ENCODE measurements at regions of chr6 and their contacts with region 1.

Region 1: GRCh38 chr6:11732036-11732631 is 46.5 kb downstream of the ADTRP start:
- DNase-seq: peak; percentile 85
- H3K4me3 Mint-ChIP-seq: peak overlapping the region; percentile 20
- H3K27ac Mint-ChIP-seq: peak overlapping the region; percentile 96
- H3K4me1 Mint-ChIP-seq: peaks cover 64% of the 10 kb centered on the region
- H3K27me3 Mint-ChIP-seq: no peaks in the 10 kb centered on the region

Region 2: DNA sequence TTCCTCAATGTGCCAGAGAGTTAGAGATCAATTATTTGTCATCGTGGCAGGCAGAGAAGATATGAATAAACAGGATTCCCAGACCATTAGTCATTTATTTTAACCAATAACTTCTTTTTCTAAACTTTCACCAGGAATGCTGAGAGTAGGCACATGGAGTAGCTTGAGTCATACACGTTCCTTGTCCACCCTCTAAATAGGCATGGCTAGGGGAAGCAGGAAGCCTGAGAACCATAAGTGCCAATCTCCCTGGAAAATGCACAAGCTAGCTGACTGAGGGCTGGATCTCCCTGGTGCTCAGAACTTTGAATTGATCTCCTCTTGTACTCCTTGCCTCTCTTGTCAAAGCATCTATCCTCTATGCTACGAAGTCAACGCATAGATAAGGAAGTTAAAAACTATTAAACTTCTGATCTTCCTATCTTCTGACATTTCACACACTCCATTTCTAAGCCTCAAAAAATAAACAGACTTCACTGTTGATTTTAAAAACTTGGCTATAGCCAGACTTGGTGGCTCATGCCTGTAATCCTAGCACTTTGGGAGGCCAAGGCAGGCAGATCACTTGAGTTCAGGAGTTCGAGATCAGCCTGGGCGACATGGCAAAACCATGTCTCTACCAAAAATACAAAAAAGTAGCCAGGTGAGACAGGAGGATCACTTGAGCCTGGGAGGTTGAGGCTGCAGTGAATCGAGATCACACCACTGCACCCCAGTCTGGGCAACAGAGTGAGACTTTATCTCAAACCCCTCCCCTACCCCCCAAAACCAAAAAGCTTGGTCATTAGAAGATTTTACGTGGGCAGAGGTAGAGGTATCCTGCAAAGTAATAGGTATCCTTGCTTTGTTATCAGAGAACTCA is 34.7 kb after region 1 on chr6:
- CTCF ChIA-PET with region 1: interaction called, 4 read pairs
- POLR2A ChIA-PET with region 1: interaction called, 10 read pairs
- intact Hi-C with region 1: loop called (anchors 1 kb)
- DNase-seq: no peak
- H3K4me3 Mint-ChIP-seq: no peak overlapping the region
- H3K27ac Mint-ChIP-seq: no peak overlapping the region
- H3K4me1 Mint-ChIP-seq: peaks cover 39% of the 10 kb centered on the region
- H3K27me3 Mint-ChIP-seq: peaks cover 8% of the 10 kb centered on the region

Region 3: GRCh38 chr6:11854408-11855165 is 122.5 kb after region 1 on chr6:
- CTCF ChIA-PET with region 1: no interaction called
- POLR2A ChIA-PET with region 1: no interaction called
- intact Hi-C with region 1: no loop called
- DNase-seq: peak; percentile 15
- H3K4me3 Mint-ChIP-seq: no peak overlapping the region
- H3K27ac Mint-ChIP-seq: no peak overlapping the region
- H3K4me1 Mint-ChIP-seq: peaks cover 6% of the 10 kb centered on the region
- H3K27me3 Mint-ChIP-seq: no peaks in the 10 kb centered on the region

Region 4: DNA sequence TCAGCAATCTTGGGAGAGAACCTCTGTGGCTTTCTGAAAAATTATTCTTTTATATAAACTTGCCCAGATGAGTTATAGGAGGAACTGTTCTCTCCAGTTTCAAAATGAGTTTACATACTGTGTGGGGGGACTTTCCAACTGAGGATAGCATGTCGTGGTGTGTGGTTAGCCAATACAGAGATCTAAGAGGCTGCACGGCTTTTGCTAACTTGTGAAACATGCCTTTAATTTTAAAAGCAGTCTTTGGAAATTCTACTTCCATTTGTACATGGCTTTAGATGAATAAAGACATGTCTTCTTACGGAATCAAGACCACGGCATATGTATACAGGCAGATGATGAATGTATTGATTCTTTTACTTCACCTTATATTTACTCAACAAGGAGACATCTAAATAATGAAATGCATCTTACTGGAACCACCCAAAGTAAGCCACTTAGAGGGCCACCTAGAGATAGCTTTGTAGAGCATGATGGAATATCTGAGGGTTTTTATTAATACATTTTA is 319.8 kb after region 1 on chr6:
- CTCF ChIA-PET with region 1: no interaction called
- POLR2A ChIA-PET with region 1: interaction called, 3 read pairs
- intact Hi-C with region 1: loop called (anchors 1 kb)
- DNase-seq: peak; percentile 78
- H3K4me3 Mint-ChIP-seq: peak overlapping the region; percentile 13
- H3K27ac Mint-ChIP-seq: peak overlapping the region; percentile 84
- H3K4me1 Mint-ChIP-seq: peaks cover 73% of the 10 kb centered on the region
- H3K27me3 Mint-ChIP-seq: no peaks in the 10 kb centered on the region

Region 5: DNA sequence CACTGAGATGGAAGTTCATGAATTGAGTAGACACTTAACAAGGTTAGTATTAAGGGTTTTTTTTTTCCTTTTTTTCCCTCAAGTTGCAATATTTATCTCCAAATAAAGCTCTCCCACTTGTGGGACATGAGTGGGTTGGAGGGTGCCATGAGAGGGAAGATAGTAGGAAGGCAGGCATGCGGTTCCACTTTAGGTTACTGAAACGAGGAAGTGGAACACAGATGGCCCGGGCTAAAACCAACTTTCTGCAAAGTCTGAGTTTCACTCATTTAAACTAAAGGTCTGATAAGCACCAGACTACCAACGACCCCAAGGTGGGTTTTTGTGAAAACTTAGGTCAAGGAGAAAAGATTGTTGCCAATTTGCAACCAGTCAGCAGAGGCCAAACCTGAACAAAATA is 1554.0 kb after region 1 on chr6:
- CTCF ChIA-PET with region 1: no interaction called
- POLR2A ChIA-PET with region 1: no interaction called
- intact Hi-C with region 1: no loop called
- DNase-seq: no peak
- H3K4me3 Mint-ChIP-seq: no peak overlapping the region
- H3K27ac Mint-ChIP-seq: no peak overlapping the region
- H3K4me1 Mint-ChIP-seq: no peaks in the 10 kb centered on the region
- H3K27me3 Mint-ChIP-seq: no peaks in the 10 kb centered on the region